ENCODE measurements at regions of chr3 and their contacts with region 1.

Region 1: DNA sequence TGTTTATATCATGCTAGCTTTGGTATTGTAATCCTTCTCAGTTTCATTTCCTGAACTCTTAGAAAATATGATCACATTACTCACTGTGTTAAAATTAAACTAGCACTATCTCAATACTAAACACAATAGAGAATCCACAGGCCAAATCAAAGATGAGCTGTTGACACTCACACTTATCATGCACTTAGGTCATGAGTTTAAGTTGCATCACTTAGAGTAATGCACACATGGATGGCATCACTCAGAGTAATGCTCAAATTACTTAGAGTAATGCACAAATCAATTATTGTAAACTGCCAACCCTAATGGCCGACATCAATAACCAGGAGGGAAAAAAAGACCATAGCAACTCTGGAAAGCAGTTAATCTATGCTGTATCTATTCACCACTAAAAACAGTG is 40.0 kb upstream of the MCF2L2 start:
- DNase-seq: no peak
- H3K4me3 Mint-ChIP-seq: no peak overlapping the region
- H3K27ac Mint-ChIP-seq: peak overlapping the region; percentile 79
- H3K4me1 Mint-ChIP-seq: peaks cover 20% of the 10 kb centered on the region
- H3K27me3 Mint-ChIP-seq: no peaks in the 10 kb centered on the region

Region 2: DNA sequence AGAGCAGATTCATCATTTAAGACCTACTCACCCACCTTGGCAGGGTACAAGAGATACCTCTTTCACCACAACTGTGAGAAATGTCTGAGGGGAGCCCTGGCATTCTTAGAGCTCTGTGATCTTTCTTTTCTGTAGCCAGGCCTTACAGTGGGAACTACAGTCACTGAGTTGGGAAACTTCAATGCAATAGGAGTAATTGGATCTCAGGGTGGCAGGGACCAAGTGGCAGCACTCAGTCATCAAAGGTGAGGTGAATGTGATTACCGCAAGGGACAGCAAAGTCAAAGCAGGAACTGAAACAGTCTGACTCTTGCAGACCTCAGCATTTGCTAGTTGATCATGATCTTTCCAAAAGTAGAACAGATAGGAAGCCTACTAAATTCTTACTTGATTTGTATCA is 32.8 kb before region 1 on chr3:
- CTCF ChIA-PET with region 1: interaction called, 5 read pairs
- POLR2A ChIA-PET with region 1: interaction called, 7 read pairs
- intact Hi-C with region 1: loop called (anchors 1 kb)
- DNase-seq: peak; percentile 74
- H3K4me3 Mint-ChIP-seq: no peak overlapping the region
- H3K27ac Mint-ChIP-seq: peak overlapping the region; percentile 69
- H3K4me1 Mint-ChIP-seq: peaks cover 58% of the 10 kb centered on the region
- H3K27me3 Mint-ChIP-seq: no peaks in the 10 kb centered on the region

Region 3: GRCh38 chr3:183555541-183556081 is 87.2 kb after region 1 on chr3 and contains the start of gene KLHL6:
- CTCF ChIA-PET with region 1: interaction called, 12 read pairs
- POLR2A ChIA-PET with region 1: no interaction called
- intact Hi-C with region 1: loop called (anchors 1 kb)
- DNase-seq: peak; percentile 90
- H3K4me3 Mint-ChIP-seq: peak within 1 kb of the TSS; percentile 100
- H3K27ac Mint-ChIP-seq: peak within 1 kb of the TSS; percentile 99
- H3K4me1 Mint-ChIP-seq: peaks cover 52% of the 10 kb centered on the region
- H3K27me3 Mint-ChIP-seq: no peaks in the 10 kb centered on the region
- total RNA-seq, gene KLHL6: 63.5 to 65.2 TPM

Region 4: GRCh38 chr3:183680061-183680460 is 211.6 kb after region 1 on chr3:
- CTCF ChIA-PET with region 1: no interaction called
- POLR2A ChIA-PET with region 1: no interaction called
- intact Hi-C with region 1: no loop called
- DNase-seq: no peak
- H3K4me3 Mint-ChIP-seq: no peak overlapping the region
- H3K27ac Mint-ChIP-seq: no peak overlapping the region
- H3K4me1 Mint-ChIP-seq: peaks cover 6% of the 10 kb centered on the region
- H3K27me3 Mint-ChIP-seq: no peaks in the 10 kb centered on the region

Region 5: DNA sequence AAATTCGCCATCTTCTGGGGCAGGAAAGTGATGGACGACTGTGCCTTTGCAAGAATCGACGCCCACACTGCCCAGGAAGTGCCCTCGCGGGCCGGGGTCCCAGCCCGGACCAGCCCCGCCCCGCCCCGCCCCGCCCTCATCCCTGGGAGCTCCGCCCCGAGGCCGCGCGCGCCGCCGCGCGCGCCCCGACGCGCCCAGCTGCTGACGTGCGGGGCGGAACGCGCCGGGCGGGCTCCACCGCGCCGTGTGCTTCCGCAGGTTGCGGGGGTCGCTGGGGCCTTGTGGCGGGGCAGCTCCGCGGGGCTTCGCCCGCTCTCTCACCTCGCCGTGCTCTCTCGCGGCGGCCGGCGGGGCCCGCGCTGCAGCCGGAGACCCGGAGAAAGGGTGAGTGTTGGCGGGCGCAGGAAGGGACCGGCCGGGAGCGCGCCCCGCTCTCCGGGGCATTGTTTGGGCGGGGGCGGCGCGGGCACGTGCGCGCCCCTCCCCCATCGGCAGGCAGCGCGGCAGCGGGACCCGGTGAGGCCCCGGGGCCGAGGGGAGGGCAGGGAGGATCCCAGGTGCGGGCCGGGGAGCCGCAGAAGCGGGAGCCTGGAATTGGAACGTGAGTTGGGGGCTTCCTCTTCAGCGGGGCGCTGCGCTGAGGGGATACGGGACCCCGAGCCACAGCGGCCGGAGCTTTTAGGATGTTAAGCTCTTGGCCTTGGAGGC is 229.3 kb after region 1 on chr3 and contains the start of gene YEATS2:
- CTCF ChIA-PET with region 1: interaction called, 7 read pairs
- POLR2A ChIA-PET with region 1: interaction called, 5 read pairs
- intact Hi-C with region 1: loop called (anchors 1 kb)
- DNase-seq: peak; percentile 88
- H3K4me3 Mint-ChIP-seq: peak within 1 kb of the TSS; percentile 82
- H3K27ac Mint-ChIP-seq: peak within 1 kb of the TSS; percentile 86
- H3K4me1 Mint-ChIP-seq: peaks cover 32% of the 10 kb centered on the region
- H3K27me3 Mint-ChIP-seq: no peaks in the 10 kb centered on the region
- total RNA-seq, gene YEATS2: 45.4 to 48.8 TPM

Region 6: GRCh38 chr3:183884427-183885296 is 416.2 kb after region 1 on chr3 and contains the start of gene PARL:
- CTCF ChIA-PET with region 1: interaction called, 10 read pairs
- POLR2A ChIA-PET with region 1: no interaction called
- intact Hi-C with region 1: loop called (anchors 1 kb)
- DNase-seq: peak; percentile 98
- H3K4me3 Mint-ChIP-seq: peak within 1 kb of the TSS; percentile 92
- H3K27ac Mint-ChIP-seq: peak within 1 kb of the TSS; percentile 86
- H3K4me1 Mint-ChIP-seq: peaks cover 31% of the 10 kb centered on the region
- H3K27me3 Mint-ChIP-seq: no peaks in the 10 kb centered on the region
- total RNA-seq, gene PARL: 77.1 to 84.1 TPM

Measured in activated CD4-positive, alpha-beta memory T cell treated with anti-CD3 and anti-CD28 coated beads for 36 hours (primary cell).